ENCODE measurements at regions of chr6 and their contacts with region 1.

Region 1: DNA sequence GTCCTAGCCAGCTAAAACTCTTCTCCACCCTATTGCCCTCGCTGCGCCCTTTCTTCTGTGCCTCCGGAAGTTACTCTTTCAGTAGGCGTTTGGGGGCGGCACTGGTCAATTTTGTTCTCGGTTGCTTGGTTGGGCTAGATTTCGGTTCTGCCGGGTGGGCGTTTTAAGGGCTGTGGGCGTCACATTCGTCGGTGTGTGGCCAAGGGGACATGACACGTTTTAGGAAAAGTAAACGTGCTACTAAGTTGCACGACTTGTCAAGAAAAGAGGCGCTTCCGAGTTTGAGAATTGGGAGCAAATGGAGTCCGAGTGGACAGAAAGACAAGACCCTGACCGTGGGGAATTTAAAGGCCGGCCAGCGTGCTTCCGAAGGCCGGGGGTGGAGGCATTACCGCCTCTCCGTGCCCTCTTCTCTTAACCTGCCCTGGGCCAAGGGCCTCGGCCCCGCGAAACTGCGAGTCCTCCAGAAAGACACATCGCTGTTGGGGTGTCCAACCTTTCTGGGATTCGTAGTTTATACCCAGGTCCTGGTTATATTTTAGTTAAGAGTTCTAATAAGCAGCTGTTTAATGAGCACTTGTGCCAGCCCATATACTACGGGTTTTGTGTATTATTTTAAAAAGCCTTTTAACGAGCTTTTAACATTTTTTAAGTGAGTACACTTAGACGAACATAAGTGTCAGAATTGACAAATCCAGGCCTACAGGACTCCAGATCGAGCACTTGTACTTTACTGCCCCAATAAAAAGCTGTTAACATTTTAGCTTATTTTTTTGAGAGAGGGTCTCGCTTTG is 661 bp upstream of the BAG6 start:
- DNase-seq: peak in 1 of 2 experiments; percentile 76
- H3K4me3 ChIP-seq: peak overlapping the region; percentile 82 to 94 (median 92)
- H3K27ac ChIP-seq: peak overlapping the region; percentile 99
- H3K4me1 ChIP-seq: peaks cover 0 to 5% (median under 1%) of the 10 kb centered on the region in 4 experiments; a peak in 2 of 7 replicates
- H3K27me3 ChIP-seq: no peaks in the 10 kb centered on the region
- CTCF ChIP-seq: peak in 1 of 3 experiments; percentile 18; a peak in 1 of 4 replicates
- EP300 ChIP-seq: no peak
- POLR2A ChIP-seq: peak in 1 of 2 experiments; percentile 79; a peak in 2 of 3 replicates
- RAD21 ChIP-seq: peak in 1 of 2 experiments; percentile 21; a peak in 2 of 4 replicates

Region 2: GRCh38 chr6:31532644-31533454 is 120.3 kb before region 1 on chr6:
- CTCF ChIA-PET with region 1: no interaction called
- POLR2A ChIA-PET with region 1: interaction called, 13 read pairs
- DNase-seq: no peak
- H3K4me3 ChIP-seq: no peak overlapping the region
- H3K27ac ChIP-seq: no peak overlapping the region
- H3K4me1 ChIP-seq: peaks cover 1 to 5% (median 4%) of the 10 kb centered on the region in 4 experiments; a peak in 4 of 7 replicates
- H3K27me3 ChIP-seq: no peaks in the 10 kb centered on the region
- CTCF ChIP-seq: no peak
- EP300 ChIP-seq: no peak
- POLR2A ChIP-seq: no peak
- RAD21 ChIP-seq: no peak

Region 3: DNA sequence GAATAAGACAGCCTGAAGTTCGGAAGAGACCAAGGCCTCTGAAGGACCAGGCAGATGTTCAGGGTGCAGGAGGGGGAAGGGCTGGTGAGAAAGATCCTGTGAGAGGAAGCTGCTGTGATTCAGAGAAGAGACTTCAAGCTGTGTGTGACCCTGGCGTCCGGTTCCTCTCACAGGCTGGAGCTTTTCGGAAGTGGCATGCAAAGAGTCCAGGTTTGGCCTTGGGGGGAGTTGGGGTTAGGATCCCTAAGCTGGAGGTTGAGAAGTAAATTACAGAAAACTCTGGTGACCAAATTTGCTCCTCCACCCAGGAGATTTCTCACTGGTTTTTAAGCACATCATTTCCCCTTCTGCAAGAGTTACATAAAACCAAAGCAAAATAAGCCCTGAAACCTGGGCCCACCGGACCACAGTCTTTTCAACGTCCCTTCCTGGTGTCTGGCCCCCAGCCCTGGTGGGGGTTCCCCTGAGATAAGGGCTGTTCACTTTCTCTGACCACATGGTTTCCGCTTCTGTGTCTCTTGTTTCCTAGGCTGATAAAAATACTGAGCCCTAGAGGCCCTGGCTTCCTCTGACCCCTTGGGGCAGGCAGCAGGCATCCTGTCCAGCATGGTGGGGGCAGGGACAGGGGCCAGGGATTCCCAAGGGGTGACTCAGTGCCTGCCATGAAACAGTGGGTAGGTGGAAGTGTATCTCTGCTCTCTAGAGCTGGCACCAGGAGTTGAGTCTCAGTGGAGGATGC is 93.0 kb before region 1 on chr6:
- CTCF ChIA-PET with region 1: no interaction called
- POLR2A ChIA-PET with region 1: no interaction called
- DNase-seq: no peak
- H3K4me3 ChIP-seq: no peak overlapping the region
- H3K27ac ChIP-seq: no peak overlapping the region
- H3K4me1 ChIP-seq: no peaks in the 10 kb centered on the region
- H3K27me3 ChIP-seq: no peaks in the 10 kb centered on the region
- CTCF ChIP-seq: no peak
- EP300 ChIP-seq: no peak
- POLR2A ChIP-seq: no peak
- RAD21 ChIP-seq: no peak

Region 4: GRCh38 chr6:31634131-31634530 is 19.0 kb before region 1 on chr6:
- CTCF ChIA-PET with region 1: interaction called, 11 read pairs
- POLR2A ChIA-PET with region 1: interaction called, 883 read pairs
- DNase-seq: no peak
- H3K4me3 ChIP-seq: no peak overlapping the region
- H3K27ac ChIP-seq: no peak overlapping the region
- H3K4me1 ChIP-seq: no peaks in the 10 kb centered on the region
- H3K27me3 ChIP-seq: no peaks in the 10 kb centered on the region
- CTCF ChIP-seq: no peak
- EP300 ChIP-seq: no peak
- POLR2A ChIP-seq: no peak
- RAD21 ChIP-seq: no peak

Region 5: DNA sequence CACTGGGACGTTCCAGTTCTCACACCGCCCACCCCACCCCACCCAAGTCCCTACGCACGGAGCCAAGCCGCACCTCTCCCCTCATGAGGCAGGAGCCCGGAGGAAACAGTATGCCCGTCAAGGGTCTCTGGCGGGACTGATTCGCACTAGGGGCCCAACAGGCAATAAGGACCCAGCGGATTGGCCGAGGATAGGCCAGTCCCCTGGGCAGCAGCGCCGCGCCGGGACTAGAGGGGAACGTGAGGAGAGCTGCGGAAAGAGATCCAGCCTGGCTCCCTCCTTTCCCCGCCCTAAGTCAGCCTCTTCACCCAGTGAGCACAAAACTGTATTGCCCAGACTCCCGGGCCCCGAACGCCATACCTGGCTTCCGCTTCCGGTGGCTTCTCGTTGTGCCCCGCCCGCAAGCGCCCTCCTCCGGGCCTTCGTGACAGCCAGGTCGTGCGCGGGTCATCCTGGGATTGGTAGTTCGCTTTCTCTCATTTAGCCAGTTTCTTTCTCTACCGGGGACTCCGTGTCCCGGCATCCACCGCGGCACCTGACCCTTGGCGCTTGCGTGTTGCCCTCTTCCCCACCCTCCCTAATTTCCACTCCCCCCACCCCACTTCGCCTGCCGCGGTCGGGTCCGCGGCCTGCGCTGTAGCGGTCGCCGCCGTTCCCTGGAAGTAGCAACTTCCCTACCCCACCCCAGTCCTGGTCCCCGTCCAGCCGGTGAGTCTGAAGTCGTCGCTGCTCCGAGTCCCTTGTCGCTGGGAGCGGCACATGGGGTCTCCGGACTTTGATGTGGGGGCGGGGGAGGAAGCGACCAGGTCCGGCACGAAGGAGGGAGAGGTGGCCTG is 12.6 kb after region 1 on chr6 and contains the start of gene CSNK2B:
- CTCF ChIA-PET with region 1: interaction called, 38 read pairs
- POLR2A ChIA-PET with region 1: interaction called, 268 read pairs
- DNase-seq: peak; percentile 88 to 91
- H3K4me3 ChIP-seq: peak within 1 kb of the TSS; percentile 88 to 94 (median 91)
- H3K27ac ChIP-seq: peak within 1 kb of the TSS; percentile 97
- H3K4me1 ChIP-seq: peaks cover 0 to 12% (median 4%) of the 10 kb centered on the region in 4 experiments; a peak in 5 of 7 replicates
- H3K27me3 ChIP-seq: no peaks in the 10 kb centered on the region
- CTCF ChIP-seq: no peak
- EP300 ChIP-seq: no peak
- POLR2A ChIP-seq: peak in 1 of 2 experiments; percentile 95; a peak in 2 of 3 replicates
- RAD21 ChIP-seq: no peak
- total RNA-seq, gene CSNK2B: 192 and 208 TPM in 2 replicates

Region 6: GRCh38 chr6:31680840-31681671 is 27.9 kb after region 1 on chr6 and contains the start of gene LY6G5C:
- CTCF ChIA-PET with region 1: interaction called, 4 read pairs
- POLR2A ChIA-PET with region 1: interaction called, 11 read pairs
- DNase-seq: peak in 1 of 2 experiments; percentile 79
- H3K4me3 ChIP-seq: peak within 1 kb of the TSS; percentile 22 to 70 (median 60)
- H3K27ac ChIP-seq: no peak within 1 kb of the TSS
- H3K4me1 ChIP-seq: peaks cover 0 to 10% (median 7%) of the 10 kb centered on the region in 4 experiments; a peak in 5 of 7 replicates
- H3K27me3 ChIP-seq: peaks cover 3 to 13% (median 12%) of the 10 kb centered on the region in 4 experiments; a peak in 6 of 7 replicates
- CTCF ChIP-seq: peak; percentile 78 to 85 (median 83)
- EP300 ChIP-seq: no peak
- POLR2A ChIP-seq: no peak
- RAD21 ChIP-seq: peak; percentile 90 to 96
- total RNA-seq, gene LY6G5C: 1.1 and 1.2 TPM in 2 replicates

Region 7: DNA sequence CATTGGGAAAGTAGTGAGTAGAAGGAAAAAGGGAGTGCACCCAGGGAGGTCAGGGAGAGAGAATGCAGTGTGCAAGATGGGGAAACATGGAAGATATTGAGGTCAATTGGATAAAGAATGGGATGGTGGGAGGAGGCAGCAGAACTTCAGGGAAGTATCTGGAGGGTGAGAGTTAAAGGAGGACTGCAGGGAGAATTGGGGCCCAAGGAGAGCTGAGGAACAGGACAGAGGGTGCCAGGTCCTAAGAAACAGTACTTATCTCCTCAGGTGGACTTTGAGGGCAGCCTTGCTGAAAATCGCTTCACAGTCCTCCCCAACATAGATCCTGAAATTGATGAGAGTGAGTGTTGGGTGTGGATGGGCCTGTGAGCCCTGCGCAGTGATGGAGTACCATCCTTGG is 105.2 kb after region 1 on chr6:
- CTCF ChIA-PET with region 1: no interaction called
- POLR2A ChIA-PET with region 1: no interaction called
- DNase-seq: no peak
- H3K4me3 ChIP-seq: no peak overlapping the region
- H3K27ac ChIP-seq: no peak overlapping the region
- H3K4me1 ChIP-seq: peaks cover 0 to 2% (median 0%) of the 10 kb centered on the region in 4 experiments; a peak in 2 of 7 replicates
- H3K27me3 ChIP-seq: no peaks in the 10 kb centered on the region
- CTCF ChIP-seq: no peak
- EP300 ChIP-seq: no peak
- POLR2A ChIP-seq: no peak
- RAD21 ChIP-seq: no peak

Region 8: GRCh38 chr6:31965700-31966099 is 312.6 kb after region 1 on chr6:
- CTCF ChIA-PET with region 1: no interaction called
- POLR2A ChIA-PET with region 1: no interaction called
- DNase-seq: no peak
- H3K4me3 ChIP-seq: no peak overlapping the region
- H3K27ac ChIP-seq: no peak overlapping the region
- H3K4me1 ChIP-seq: no peaks in the 10 kb centered on the region
- H3K27me3 ChIP-seq: no peaks in the 10 kb centered on the region
- CTCF ChIP-seq: no peak
- EP300 ChIP-seq: no peak
- POLR2A ChIP-seq: no peak
- RAD21 ChIP-seq: no peak

Measured in H1 (cell line).